PC-3 (cell line): ENCODE measurements at regions of chr22 and their contacts with region 1.

Region 1: DNA sequence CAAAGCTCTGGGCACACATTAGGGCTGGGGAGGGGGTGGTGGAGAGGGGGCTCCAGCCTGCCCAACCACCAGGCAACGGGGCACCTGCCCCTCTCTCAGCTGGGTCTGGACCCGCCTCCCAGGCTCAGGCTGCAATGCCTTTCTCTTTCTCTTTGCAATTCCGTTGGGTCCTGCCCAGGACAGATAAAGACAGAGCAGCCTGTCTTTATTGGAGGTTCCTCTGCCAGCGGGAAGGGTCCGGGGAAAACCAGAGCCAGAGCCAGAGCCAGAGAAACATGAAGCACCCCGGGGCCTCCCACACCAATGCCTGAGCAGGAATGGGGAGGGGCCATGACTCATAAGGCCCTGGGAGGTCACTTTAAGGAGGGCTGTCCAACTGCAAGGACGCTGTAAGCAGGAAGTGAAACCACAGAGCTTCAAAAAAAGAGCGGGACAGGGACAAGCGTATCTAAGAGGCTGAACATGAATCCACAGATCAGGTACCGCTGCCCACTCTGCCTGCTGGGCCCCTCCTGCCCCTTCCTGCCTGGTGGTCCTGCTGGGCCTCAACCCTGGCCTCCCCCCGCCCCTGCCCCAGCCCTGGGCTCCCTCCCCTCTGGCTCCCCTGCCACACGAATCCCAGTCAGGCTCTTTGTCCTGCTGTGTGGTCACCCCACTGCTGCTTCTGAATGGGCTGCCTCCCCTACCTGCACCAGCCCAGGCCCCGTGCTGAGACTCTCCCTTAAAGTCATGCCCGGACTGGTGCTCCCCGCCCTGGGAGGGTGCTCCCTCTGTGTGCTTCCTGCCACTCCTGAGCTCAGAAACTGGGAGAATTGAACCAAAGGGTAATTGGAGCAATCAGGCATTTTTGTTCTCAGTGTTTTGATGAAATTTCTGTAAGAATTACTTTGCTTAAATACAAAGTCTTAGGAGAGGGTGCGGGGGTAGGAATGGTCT is at the start of gene APOBEC3B:
- DNase-seq: peak; percentile 91
- ATAC-seq: peak; percentile 91
- H3K4me3 ChIP-seq: peak within 1 kb of the TSS; percentile 58
- H3K27ac ChIP-seq: peak within 1 kb of the TSS; percentile 79
- H3K4me1 ChIP-seq: peaks cover 26% of the 10 kb centered on the region
- H3K27me3 ChIP-seq: no peaks in the 10 kb centered on the region
- CTCF ChIP-seq: no peak
- total RNA-seq, gene APOBEC3B: 11.3 TPM in 2 replicates

Region 2: DNA sequence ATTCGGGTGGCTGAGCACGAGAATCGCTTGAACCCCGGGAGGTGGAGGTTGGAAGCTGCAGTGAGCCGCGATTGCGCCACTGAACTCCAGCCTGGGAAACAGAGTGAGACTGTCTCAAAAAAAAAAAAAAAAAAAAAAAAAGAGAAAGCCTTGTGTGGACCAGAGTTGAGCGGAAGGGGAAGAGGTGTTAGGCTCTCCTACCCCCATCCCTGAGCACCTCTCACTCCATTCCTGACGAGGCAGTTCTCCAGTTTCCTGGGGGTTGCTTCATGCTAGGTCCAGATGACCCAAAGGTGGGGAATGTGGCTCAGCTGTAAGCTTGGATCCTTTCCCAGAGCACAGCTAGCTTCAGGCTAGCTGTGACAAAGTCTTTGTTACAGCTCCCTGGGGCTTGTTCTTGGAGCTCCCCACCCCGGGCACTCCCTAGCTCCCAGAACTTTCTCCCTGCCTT is 179.6 kb before region 1 on chr22:
- CTCF ChIA-PET with region 1: no interaction called
- POLR2A ChIA-PET with region 1: interaction called, 12 read pairs
- intact Hi-C with region 1: no loop called
- DNase-seq: peak; percentile 87
- ATAC-seq: peak; percentile 65
- H3K4me3 ChIP-seq: no peak overlapping the region
- H3K27ac ChIP-seq: no peak overlapping the region
- H3K4me1 ChIP-seq: no peaks in the 10 kb centered on the region
- H3K27me3 ChIP-seq: no peaks in the 10 kb centered on the region
- CTCF ChIP-seq: no peak

Region 3: GRCh38 chr22:38927033-38927781 is 55.1 kb before region 1 on chr22:
- CTCF ChIA-PET with region 1: no interaction called
- POLR2A ChIA-PET with region 1: no interaction called
- intact Hi-C with region 1: loop called (anchors 10 kb)
- DNase-seq: no peak
- ATAC-seq: no peak
- H3K4me3 ChIP-seq: no peak overlapping the region
- H3K27ac ChIP-seq: no peak overlapping the region
- H3K4me1 ChIP-seq: peaks cover 30% of the 10 kb centered on the region
- H3K27me3 ChIP-seq: no peaks in the 10 kb centered on the region
- CTCF ChIP-seq: 0 out of 2 replicates have a peak, but pooled peaks have one; percentile 10

Region 4: GRCh38 chr22:39055658-39056057 is 73.4 kb after region 1 on chr22:
- CTCF ChIA-PET with region 1: no interaction called
- POLR2A ChIA-PET with region 1: no interaction called
- intact Hi-C with region 1: no loop called
- DNase-seq: no peak
- ATAC-seq: no peak
- H3K4me3 ChIP-seq: no peak overlapping the region
- H3K27ac ChIP-seq: no peak overlapping the region
- H3K4me1 ChIP-seq: no peaks in the 10 kb centered on the region
- H3K27me3 ChIP-seq: no peaks in the 10 kb centered on the region
- CTCF ChIP-seq: no peak

Region 5: DNA sequence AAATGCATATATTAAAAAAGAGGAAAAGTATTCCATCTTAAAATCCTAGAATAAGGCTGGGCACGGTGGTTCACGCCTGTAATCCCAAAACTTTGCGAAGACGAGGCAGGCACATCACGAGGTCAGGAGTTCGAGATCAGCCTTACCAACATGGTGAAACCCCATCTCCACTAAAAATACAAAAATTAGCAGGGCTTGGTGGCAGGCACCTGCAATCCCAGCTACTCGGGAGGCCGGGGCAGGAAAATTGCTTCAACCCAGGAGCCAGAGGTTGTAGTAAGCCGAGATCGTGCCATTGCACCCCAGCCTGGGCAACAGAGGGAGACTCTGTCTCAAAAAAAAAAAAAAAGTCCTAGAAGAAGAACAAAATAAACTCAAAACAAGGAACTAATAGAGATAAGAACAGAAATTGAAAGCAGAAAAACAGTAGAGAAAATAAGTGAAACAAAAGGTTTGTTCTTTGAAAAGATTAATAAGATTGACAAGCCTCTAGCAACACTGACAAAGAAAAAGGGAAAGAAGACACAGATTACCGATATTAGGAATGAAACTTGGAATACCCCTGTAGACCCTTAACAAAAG is 215.2 kb after region 1 on chr22:
- CTCF ChIA-PET with region 1: no interaction called
- POLR2A ChIA-PET with region 1: no interaction called
- intact Hi-C with region 1: no loop called
- DNase-seq: no peak
- ATAC-seq: no peak
- H3K4me3 ChIP-seq: no peak overlapping the region
- H3K27ac ChIP-seq: no peak overlapping the region
- H3K4me1 ChIP-seq: no peaks in the 10 kb centered on the region
- H3K27me3 ChIP-seq: no peaks in the 10 kb centered on the region
- CTCF ChIP-seq: no peak

Region 6: DNA sequence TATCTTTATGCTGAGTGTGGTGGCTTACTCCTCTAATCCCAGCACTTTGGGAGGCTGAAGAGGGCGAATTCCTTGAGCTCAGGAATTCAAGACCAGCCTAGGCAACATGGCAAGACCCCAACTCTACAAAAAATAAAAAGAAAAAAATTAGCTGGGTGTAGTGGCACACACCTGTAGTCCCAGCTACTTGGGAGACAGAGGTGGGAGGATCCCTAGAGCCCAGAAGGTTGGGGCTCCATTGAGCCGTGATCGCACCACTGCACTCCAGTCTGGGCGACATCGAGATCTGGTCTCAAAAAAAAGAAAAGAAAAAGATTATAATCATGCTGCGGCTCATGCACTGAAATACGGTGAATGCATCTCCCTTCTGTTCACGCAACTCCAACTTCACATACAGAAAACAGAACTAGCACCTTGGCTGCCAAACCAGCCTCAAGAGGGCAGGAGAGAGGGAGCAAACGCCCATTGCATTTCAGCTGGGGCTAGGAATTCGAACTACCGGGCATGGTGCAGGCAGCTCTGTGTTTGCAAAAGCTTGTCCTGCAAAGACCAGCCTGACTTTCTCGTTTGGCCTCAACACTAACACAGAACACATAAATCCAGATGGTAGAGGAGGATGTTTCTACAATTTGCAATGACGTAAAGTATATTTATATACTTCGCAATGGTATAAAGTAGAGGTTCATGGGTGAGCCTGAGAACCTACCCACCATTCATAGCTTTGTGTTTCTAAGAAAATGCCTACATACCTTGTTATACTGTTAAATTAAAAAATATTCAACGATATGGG is 361.2 kb after region 1 on chr22:
- CTCF ChIA-PET with region 1: interaction called, 11 read pairs
- POLR2A ChIA-PET with region 1: no interaction called
- intact Hi-C with region 1: no loop called
- DNase-seq: peak; percentile 62
- ATAC-seq: peak; percentile 81
- H3K4me3 ChIP-seq: no peak overlapping the region
- H3K27ac ChIP-seq: no peak overlapping the region
- H3K4me1 ChIP-seq: peaks cover 7% of the 10 kb centered on the region; the same call in 1 of the 2 replicates
- H3K27me3 ChIP-seq: no peaks in the 10 kb centered on the region
- CTCF ChIP-seq: peak; percentile 66